ENCODE measurements at regions of chr12 and their contacts with region 1.

Region 1: DNA sequence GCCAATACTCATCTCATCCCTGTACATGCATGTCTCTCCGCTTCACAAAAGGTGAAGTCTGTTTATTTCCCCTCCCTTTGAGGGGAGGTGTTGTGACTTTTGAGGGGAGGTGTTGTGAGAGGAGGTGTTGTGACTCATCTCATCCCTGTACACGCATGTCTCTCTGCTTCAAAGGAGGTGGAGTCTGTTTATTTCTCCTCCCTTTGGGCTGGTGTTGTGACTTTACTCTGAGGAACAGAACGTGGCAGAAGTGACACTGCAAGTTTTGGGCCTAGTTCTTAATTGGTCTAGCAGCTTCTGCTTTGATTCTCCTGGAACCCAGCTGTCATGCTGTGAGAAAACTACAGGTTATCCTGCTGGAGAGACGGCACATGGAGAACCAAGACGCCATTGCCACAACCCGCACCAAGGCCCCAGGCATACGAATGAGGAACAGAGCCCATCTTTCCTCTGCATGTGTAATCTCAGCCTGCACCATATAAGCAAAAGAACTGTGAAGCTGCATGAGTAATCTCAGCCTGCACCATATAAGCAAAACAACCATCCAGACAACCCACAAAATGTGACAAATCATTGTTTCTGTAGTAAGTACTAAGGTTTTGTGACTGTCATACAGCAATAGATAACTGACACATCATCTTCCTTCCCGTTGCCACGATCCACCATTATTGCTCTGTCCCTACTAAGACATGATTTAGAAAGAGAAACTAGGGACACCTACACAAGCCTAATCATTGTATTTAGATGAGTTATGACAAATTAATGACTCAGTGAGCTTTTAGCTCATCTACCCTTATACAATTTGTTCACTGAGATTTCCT is 30.0 kb downstream of the GALNT4 start:
- DNase-seq: peak; percentile 71
- H3K4me3 Mint-ChIP-seq: peak overlapping the region; percentile 36
- H3K27ac Mint-ChIP-seq: peak overlapping the region; percentile 99
- H3K4me1 Mint-ChIP-seq: peaks cover 30% of the 10 kb centered on the region
- H3K27me3 Mint-ChIP-seq: no peaks in the 10 kb centered on the region

Region 2: DNA sequence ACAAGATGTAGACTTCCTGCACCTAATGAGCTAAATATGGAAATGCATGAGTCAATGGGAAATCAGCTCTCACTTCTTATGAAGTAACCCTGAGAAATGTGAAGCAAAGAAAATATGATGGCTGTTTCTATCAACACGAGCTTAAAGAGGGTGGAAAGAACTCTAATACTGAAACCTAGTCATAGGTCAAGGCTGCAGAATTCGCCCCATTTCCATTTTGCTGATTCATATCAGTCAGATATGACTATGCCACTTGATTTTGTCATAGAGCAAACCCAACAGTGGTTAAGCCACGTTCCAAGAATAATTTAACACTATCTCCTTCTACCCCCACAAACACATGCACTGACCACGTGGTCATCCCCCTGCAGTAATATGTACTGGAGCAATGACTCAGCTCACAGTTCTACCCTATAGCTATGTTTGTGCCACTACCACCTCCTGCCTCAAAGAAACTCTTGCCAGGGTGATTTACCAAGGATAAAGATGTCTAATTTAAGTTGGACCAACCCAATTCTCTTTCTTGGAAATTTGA is 1195.0 kb before region 1 on chr12:
- CTCF ChIA-PET with region 1: no interaction called
- POLR2A ChIA-PET with region 1: no interaction called
- intact Hi-C with region 1: loop called (anchors 2 kb)
- DNase-seq: peak; percentile 75
- H3K4me3 Mint-ChIP-seq: no peak overlapping the region
- H3K27ac Mint-ChIP-seq: peak overlapping the region; percentile 72
- H3K4me1 Mint-ChIP-seq: peaks cover 27% of the 10 kb centered on the region
- H3K27me3 Mint-ChIP-seq: no peaks in the 10 kb centered on the region

Region 3: DNA sequence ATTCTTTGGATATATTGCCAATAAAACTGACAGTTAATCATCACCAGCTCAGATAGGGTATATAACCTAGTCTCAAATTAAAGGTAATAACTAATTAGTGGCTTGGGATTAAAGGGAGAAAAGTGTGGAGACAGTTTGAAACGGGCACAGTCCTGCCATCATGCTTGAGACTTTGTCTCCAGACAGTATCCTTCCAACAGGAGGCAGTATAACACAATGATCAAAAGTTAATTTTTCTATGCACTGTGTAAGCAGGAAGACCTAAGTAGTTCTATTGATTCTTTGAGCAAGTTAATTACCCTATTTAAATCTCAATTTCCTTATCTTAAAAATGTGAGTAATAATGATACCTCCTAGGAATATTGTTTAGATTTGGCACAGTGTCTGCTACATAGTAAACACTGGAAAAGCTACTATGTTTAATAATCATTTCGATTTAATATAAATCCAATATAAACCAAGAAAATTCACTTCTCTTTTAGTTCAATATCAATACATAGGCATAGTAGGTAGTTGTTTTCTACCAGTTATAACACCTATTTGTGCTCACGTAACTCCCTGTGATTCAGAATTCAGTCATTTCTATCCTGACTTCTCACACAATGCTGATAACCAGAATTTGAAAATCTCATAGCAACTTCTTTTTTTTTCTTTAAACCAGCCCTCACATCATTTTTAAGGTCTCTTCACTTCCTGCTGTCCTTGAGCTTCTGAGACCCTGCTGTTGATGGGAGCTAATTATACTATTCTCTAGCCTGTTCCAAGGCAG is 23.7 kb before region 1 on chr12:
- CTCF ChIA-PET with region 1: interaction called, 8 read pairs
- POLR2A ChIA-PET with region 1: interaction called, 3 read pairs
- intact Hi-C with region 1: loop called (anchors 1 kb)
- DNase-seq: no peak
- H3K4me3 Mint-ChIP-seq: no peak overlapping the region
- H3K27ac Mint-ChIP-seq: peak overlapping the region; percentile 64
- H3K4me1 Mint-ChIP-seq: peaks cover 58% of the 10 kb centered on the region
- H3K27me3 Mint-ChIP-seq: no peaks in the 10 kb centered on the region

Region 4: GRCh38 chr12:89856431-89856830 is 361.8 kb after region 1 on chr12:
- CTCF ChIA-PET with region 1: no interaction called
- POLR2A ChIA-PET with region 1: no interaction called
- intact Hi-C with region 1: loop called (anchors 10 kb)
- DNase-seq: no peak
- H3K4me3 Mint-ChIP-seq: no peak overlapping the region
- H3K27ac Mint-ChIP-seq: peak overlapping the region; percentile 43
- H3K4me1 Mint-ChIP-seq: peaks cover 52% of the 10 kb centered on the region
- H3K27me3 Mint-ChIP-seq: no peaks in the 10 kb centered on the region

Region 5: DNA sequence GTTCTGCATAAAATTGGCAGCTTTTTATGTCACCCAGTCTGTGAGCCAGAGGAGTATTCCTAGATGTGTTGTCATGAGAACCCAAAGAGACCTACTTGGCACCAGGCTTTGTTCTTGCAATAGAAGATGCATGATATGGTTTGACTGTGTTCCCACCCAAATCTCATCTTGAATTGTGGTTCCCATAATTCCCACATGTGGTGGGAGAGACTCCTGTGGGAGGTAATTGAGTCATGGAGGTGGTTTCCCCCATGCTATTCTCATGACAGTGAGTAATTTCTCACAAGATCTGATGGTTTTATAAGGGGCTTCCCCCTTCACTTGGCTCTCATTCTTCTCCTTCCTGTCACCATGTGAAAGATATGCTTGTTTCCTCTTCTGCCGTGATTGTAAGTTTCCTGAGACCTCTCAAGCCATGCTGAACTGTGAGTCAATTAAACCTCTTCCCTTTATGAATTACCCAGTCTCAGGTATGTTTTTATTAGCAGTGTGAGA is 786.0 kb after region 1 on chr12:
- CTCF ChIA-PET with region 1: no interaction called
- POLR2A ChIA-PET with region 1: no interaction called
- intact Hi-C with region 1: loop called (anchors 1 kb)
- DNase-seq: peak; percentile 37
- H3K4me3 Mint-ChIP-seq: no peak overlapping the region
- H3K27ac Mint-ChIP-seq: peak overlapping the region; percentile 13
- H3K4me1 Mint-ChIP-seq: peaks cover 16% of the 10 kb centered on the region
- H3K27me3 Mint-ChIP-seq: peaks cover 5% of the 10 kb centered on the region

Measured in activated CD4-positive, alpha-beta memory T cell treated with anti-CD3 and anti-CD28 coated beads for 36 hours (primary cell).